ENCODE measurements at regions of chr10 and their contacts with region 1.

Region 1: DNA sequence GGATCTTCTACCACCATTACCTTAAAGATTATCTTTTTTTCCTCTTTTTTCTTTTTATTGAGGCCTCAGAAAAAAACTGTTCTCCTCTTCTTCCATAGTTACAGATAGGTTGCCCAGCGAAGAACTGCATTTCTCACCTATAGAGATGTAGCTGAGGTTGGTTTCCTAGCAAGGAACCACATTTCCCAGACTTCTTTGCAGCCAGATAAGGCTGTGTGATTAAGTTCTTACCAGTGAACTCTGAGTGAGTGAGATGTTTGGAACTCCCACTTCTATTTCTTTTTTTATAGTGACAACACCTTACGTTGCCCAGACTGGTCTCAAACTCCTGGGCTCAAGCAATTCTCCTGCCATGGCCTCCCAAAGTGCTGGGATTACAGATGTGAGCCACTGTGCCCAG is 5.9 kb upstream of the MCMBP start:
- DNase-seq: no peak
- H3K4me3 ChIP-seq: no peak overlapping the region
- H3K27ac ChIP-seq: no peak overlapping the region
- H3K4me1 ChIP-seq: peaks cover 3% of the 10 kb centered on the region
- H3K27me3 ChIP-seq: no peaks in the 10 kb centered on the region
- CTCF ChIP-seq: no peak

Region 2: GRCh38 chr10:119865699-119866235 is 12.8 kb before region 1 on chr10:
- CTCF ChIA-PET with region 1: interaction called, 11 read pairs
- POLR2A ChIA-PET with region 1: no interaction called
- intact Hi-C with region 1: no loop called
- DNase-seq: no peak
- H3K4me3 ChIP-seq: no peak overlapping the region
- H3K27ac ChIP-seq: no peak overlapping the region
- H3K4me1 ChIP-seq: peaks cover 11% of the 10 kb centered on the region
- H3K27me3 ChIP-seq: no peaks in the 10 kb centered on the region
- CTCF ChIP-seq: no peak

Region 3: GRCh38 chr10:119919826-119920225 is 41.3 kb after region 1 on chr10:
- CTCF ChIA-PET with region 1: no interaction called
- POLR2A ChIA-PET with region 1: no interaction called
- intact Hi-C with region 1: no loop called
- DNase-seq: no peak
- H3K4me3 ChIP-seq: no peak overlapping the region
- H3K27ac ChIP-seq: no peak overlapping the region
- H3K4me1 ChIP-seq: no peaks in the 10 kb centered on the region
- H3K27me3 ChIP-seq: no peaks in the 10 kb centered on the region
- CTCF ChIP-seq: no peak

Measured in A673 (cell line).